ENCODE measurements at regions of chr18 and their contacts with region 1.

Region 1: GRCh38 chr18:57859314-57859713 is 56.2 kb upstream of the ATP8B1 start:
- DNase-seq: peak; percentile 38
- H3K4me3 Mint-ChIP-seq: no peak overlapping the region
- H3K27ac Mint-ChIP-seq: no peak overlapping the region
- H3K4me1 Mint-ChIP-seq: peaks cover 15% of the 10 kb centered on the region
- H3K27me3 Mint-ChIP-seq: no peaks in the 10 kb centered on the region
- CTCF ChIP-seq: peak; percentile 36

Region 2: GRCh38 chr18:57715681-57716080 is 143.6 kb before region 1 on chr18:
- CTCF ChIA-PET with region 1: interaction called, 4 read pairs
- intact Hi-C with region 1: loop called (anchors 10 kb)
- DNase-seq: no peak
- H3K4me3 Mint-ChIP-seq: no peak overlapping the region
- H3K27ac Mint-ChIP-seq: peak overlapping the region; percentile 6
- H3K4me1 Mint-ChIP-seq: peaks cover 34% of the 10 kb centered on the region
- H3K27me3 Mint-ChIP-seq: no peaks in the 10 kb centered on the region
- CTCF ChIP-seq: no peak

Region 3: GRCh38 chr18:58367425-58368140 is 508.3 kb after region 1 on chr18:
- CTCF ChIA-PET with region 1: no interaction called
- intact Hi-C with region 1: no loop called
- DNase-seq: no peak
- H3K4me3 Mint-ChIP-seq: no peak overlapping the region
- H3K27ac Mint-ChIP-seq: no peak overlapping the region
- H3K4me1 Mint-ChIP-seq: no peaks in the 10 kb centered on the region
- H3K27me3 Mint-ChIP-seq: no peaks in the 10 kb centered on the region
- CTCF ChIP-seq: no peak